ENCODE measurements at regions of chr2 and their contacts with region 1.

Region 1: DNA sequence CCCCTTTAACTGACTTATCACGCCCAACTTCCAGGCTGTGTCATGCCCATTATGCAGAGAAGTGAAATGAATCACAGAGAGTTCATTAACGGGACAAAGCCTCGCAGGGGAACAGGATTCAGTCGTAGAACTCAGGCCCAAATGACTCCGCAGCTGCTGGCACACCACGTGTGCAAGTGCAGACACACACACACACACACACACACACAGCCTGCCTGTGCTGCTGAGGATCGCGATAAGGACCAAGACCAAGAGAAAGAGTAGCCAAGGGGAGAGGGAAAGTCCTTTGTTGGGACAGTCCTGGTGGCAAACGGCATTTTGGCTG is 90.0 kb upstream of the TAF1B start:
- DNase-seq: peak; percentile 88
- ATAC-seq: peak; percentile 82
- H3K4me3 ChIP-seq: peak overlapping the region; percentile 50 to 56
- H3K27ac ChIP-seq: peak overlapping the region; percentile 88
- H3K4me1 ChIP-seq: peaks cover 26 to 46% of the 10 kb centered on the region in 2 experiments
- H3K27me3 ChIP-seq: no peaks in the 10 kb centered on the region
- CTCF ChIP-seq: no peak
- POLR2A ChIP-seq: no peak
- RAD21 ChIP-seq: no peak

Region 2: GRCh38 chr2:9326975-9327374 is 426.3 kb before region 1 on chr2:
- CTCF ChIA-PET with region 1: no interaction called
- POLR2A ChIA-PET with region 1: no interaction called
- RAD21 ChIA-PET with region 1: no interaction called
- intact Hi-C with region 1: no loop called
- DNase-seq: no peak
- ATAC-seq: no peak
- H3K4me3 ChIP-seq: no peak overlapping the region
- H3K27ac ChIP-seq: no peak overlapping the region
- H3K4me1 ChIP-seq: peaks cover 0 to 5% of the 10 kb centered on the region in 2 experiments; a peak in 2 of 4 replicates
- H3K27me3 ChIP-seq: no peaks in the 10 kb centered on the region
- CTCF ChIP-seq: no peak
- POLR2A ChIP-seq: no peak
- RAD21 ChIP-seq: no peak

Region 3: GRCh38 chr2:9555297-9556141 is 197.7 kb before region 1 on chr2 and contains the start of gene ADAM17:
- CTCF ChIA-PET with region 1: no interaction called
- POLR2A ChIA-PET with region 1: no interaction called
- RAD21 ChIA-PET with region 1: no interaction called
- intact Hi-C with region 1: loop called (anchors 5 kb)
- DNase-seq: peak; percentile 88
- ATAC-seq: peak; percentile 93
- H3K4me3 ChIP-seq: peak within 1 kb of the TSS; percentile 84 to 91
- H3K27ac ChIP-seq: peak within 1 kb of the TSS; percentile 90
- H3K4me1 ChIP-seq: peaks cover 36 to 65% of the 10 kb centered on the region in 2 experiments
- H3K27me3 ChIP-seq: no peaks in the 10 kb centered on the region
- CTCF ChIP-seq: peak in 1 of 3 experiments; percentile 45; a peak in 3 of 6 replicates
- POLR2A ChIP-seq: peak; percentile 77
- RAD21 ChIP-seq: peak; percentile 15; the same call in 1 of the 2 replicates
- total RNA-seq, gene ADAM17: 39.2 TPM

Measured in HCT116 (cell line).